Left cardiac atrium (tissue), 4 donors: ENCODE measurements at regions of chr15 and their contacts with region 1.

Region 1: DNA sequence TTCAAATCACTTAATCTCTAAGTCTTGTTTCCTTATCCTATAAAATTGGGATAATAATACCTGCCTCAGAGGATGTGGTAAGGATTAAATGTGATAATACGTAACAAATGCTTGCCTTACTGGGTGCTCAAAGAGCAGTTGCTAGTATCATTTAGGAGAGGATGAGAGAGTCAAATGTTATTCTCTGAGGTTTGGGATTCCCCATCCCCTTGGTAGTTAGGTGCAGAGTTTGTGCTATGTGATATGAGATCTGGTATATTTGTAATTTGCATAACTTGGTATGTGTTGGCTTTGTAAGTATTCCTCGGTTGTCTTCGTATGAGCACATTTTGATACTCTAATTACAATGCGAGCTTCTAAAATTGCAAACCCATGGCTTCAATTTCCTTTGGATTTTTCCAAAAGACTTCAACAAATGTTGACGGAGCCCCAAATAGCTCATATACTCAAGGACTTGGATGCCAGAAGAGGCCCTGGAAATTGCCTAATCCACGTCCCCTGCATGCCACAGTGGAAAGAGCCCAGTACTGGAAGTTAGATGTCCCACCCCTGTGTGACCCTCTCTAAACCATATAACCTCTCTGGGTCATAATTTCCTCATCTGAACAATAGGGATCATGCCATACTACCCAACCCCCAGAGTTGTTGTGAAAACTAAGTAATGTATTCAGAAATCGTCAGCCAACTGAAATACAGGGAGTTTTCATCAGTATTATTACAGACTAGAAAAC is 85.0 kb downstream of the FBN1 start:
- DNase-seq: peak; percentile 31
- ATAC-seq: peak in 1 of 2 donors; percentile 74

Region 2: GRCh38 chr15:48617619-48618018 is 57.1 kb after region 1 on chr15:
- intact Hi-C with region 1: loop called in 1 of 2 experiments (anchors 5 kb)
- DNase-seq: peak; percentile 55
- ATAC-seq: peak; percentile 91